ENCODE measurements at regions of chr17 and their contacts with region 1.

Region 1: DNA sequence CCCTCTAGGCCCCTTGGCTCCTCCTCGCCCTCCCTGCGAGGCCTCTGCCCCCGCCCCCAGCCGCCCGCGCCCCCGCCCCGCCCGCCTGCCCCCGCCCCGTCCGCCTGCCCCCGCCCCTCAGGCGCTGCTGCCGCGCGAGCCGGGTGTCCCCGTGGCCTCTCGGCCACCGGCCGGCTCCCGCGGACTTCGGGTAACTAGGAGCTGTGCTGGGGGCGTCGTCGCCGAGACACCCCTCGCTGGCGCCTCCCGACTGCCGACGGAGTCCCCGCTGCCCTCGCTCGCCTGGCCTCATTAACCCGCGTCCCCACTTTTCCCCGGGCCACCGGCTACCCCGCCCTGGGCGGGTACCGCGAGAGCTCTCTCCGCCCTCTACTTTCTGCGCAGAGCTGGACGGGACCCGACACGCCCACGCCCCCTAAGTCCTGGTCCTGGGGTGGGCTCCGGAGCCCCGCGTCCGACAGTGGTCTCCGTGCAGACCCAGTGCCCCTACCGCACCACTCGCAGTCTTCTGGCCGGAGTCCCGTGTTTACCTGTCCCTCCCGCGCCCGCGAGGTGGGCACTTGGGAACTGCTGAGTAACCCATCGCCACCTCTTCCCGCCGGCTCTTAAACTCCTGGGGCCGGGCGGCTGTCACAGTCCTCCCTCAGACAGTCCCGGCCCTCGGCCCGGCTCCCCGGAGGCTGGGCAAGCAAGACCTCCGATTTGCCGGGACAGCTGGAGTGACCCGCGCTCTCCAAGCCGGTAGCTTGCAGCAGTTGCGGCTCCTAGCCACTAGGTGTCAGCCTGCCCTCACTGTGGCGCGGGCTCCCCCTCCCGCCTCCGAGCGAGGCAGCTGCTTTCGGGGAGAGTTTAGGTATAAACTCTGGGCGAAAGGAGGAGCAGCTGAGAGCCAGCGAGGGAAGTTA is at the start of gene TLCD1:
- DNase-seq: peak; percentile 83 to 92 (median 85)
- H3K4me3 ChIP-seq: peak within 1 kb of the TSS; percentile 91
- H3K4me3 Mint-ChIP-seq: peak within 1 kb of the TSS; percentile 94 to 99 (median 97)
- H3K27ac ChIP-seq: peak within 1 kb of the TSS; percentile 97
- H3K27ac Mint-ChIP-seq: peak within 1 kb of the TSS; percentile 97 to 100 (median 99)
- H3K4me1 ChIP-seq: peaks cover 33% of the 10 kb centered on the region
- H3K4me1 Mint-ChIP-seq: peaks cover 51 to 72% (median 54%) of the 10 kb centered on the region in 3 donors
- H3K27me3 ChIP-seq: no peaks in the 10 kb centered on the region
- H3K27me3 Mint-ChIP-seq: peaks cover 0 to 5% of the 10 kb centered on the region in 2 donors
- total RNA-seq, gene TLCD1: 36.5 to 38.9 TPM

Region 2: DNA sequence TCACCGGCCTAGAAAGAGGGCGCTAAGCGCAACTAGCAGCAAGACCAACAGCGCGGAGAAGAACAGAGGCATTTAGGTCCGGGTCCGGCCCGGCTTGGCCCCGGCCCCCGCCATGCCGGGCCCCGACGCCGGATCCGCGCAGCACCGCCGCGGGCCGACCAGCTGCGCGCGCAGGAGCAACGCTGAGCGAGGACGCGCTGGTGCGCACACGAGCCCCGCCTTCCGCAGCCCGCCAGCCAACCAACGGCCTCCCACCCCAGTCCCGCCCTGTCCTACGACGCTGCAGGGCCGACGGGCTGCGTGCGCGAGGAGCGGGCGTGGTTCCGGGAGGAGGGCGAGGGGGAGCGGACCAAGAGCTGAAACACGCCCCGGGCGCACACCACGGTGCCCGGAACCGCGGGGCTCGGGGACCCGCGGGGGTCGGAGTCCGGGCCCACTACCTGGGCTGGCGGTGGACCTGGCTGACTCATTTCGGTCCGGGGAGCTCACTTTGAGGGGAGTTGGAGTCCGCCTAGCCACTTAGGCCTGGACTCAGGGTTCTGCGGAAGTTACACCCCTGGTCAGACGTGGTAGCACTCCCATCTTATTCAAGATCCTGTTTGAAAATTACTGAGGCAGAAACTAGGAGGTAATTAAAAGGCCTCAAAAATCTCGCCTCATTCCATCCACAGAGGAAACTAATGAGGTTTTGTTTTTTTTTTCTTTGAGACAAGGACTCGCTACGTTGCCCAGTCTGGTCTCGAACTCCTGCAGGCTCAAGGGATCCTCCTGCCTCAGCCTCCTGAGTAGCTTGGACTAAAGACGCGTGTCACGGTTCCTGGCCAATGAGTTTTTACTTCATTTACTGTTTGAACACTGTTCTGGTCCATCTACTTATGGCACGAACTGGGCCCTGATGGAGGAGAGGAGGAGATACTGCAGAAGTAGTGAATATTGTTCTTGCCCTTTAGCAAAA is 81.2 kb before region 1 on chr17 and contains the start of gene BLTP2:
- CTCF ChIA-PET with region 1: interaction called, 12 read pairs
- POLR2A ChIA-PET with region 1: interaction called, 18 read pairs
- DNase-seq: peak; percentile 92 to 97 (median 94)
- H3K4me3 ChIP-seq: peak within 1 kb of the TSS; percentile 82
- H3K4me3 Mint-ChIP-seq: peak within 1 kb of the TSS; percentile 86 to 96 (median 93)
- H3K27ac ChIP-seq: peak within 1 kb of the TSS; percentile 90
- H3K27ac Mint-ChIP-seq: peak within 1 kb of the TSS; percentile 90 to 98 (median 98)
- H3K4me1 ChIP-seq: peaks cover 35% of the 10 kb centered on the region
- H3K4me1 Mint-ChIP-seq: peaks cover 38 to 56% (median 45%) of the 10 kb centered on the region in 3 donors
- H3K27me3 ChIP-seq: no peaks in the 10 kb centered on the region
- H3K27me3 Mint-ChIP-seq: peaks cover 0 to 2% of the 10 kb centered on the region in 2 donors
- total RNA-seq, gene BLTP2: 176 to 192 TPM

Region 3: GRCh38 chr17:28667870-28668269 is 58.6 kb before region 1 on chr17:
- CTCF ChIA-PET with region 1: no interaction called
- POLR2A ChIA-PET with region 1: no interaction called
- DNase-seq: no peak
- H3K4me3 ChIP-seq: no peak overlapping the region
- H3K4me3 Mint-ChIP-seq: peak overlapping the region in 1 of 7 donors; percentile 25
- H3K27ac ChIP-seq: no peak overlapping the region
- H3K27ac Mint-ChIP-seq: peak overlapping the region in 6 of 8 donors; percentile 26 to 85 (median 50)
- H3K4me1 ChIP-seq: peaks cover 42% of the 10 kb centered on the region
- H3K4me1 Mint-ChIP-seq: peaks cover 41 to 60% (median 49%) of the 10 kb centered on the region in 3 donors
- H3K27me3 ChIP-seq: no peaks in the 10 kb centered on the region
- H3K27me3 Mint-ChIP-seq: no peaks in the 10 kb centered on the region

Region 4: DNA sequence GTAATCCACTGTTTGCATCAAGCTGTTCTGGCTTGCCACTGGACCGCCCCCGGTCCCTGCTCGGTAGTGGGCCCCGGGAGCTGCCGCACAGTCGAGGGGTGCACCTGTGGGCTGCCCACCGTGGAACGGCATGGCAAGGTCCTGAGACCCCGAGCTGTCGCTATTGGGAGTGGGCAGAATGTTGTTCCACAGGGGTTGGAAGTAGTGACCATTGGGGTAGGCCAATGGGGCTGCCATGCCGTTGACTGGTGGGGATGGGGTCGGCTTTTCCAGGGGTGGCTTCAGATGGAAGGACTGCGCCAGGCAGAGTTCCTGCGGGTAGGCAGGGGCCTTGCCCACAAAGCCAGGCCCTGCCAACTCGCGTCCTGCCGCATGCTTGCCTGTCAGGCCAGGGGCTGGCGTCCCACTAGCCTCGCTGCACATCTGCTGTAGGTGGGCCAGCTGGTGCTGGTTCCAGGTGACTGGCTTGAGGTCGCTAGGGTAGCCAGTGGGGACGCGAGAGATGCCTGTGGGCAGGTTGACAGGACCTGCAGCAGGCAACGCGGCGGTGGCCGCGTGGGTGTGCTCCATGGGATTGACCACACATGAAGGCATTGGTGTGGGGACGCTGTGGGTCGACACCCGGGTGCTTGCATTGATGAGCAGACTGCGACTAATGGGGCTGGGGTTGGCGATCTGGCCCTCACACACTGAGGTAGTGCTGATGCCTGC is 32.1 kb after region 1 on chr17:
- CTCF ChIA-PET with region 1: interaction called, 579 read pairs
- POLR2A ChIA-PET with region 1: interaction called, 3 read pairs
- DNase-seq: no peak
- H3K4me3 ChIP-seq: no peak overlapping the region
- H3K4me3 Mint-ChIP-seq: no peak overlapping the region
- H3K27ac ChIP-seq: no peak overlapping the region
- H3K27ac Mint-ChIP-seq: peak overlapping the region in 1 of 8 donors; percentile 32
- H3K4me1 ChIP-seq: no peaks in the 10 kb centered on the region
- H3K4me1 Mint-ChIP-seq: peaks cover 0 to under 1% (median under 1%) of the 10 kb centered on the region in 3 donors
- H3K27me3 ChIP-seq: no peaks in the 10 kb centered on the region
- H3K27me3 Mint-ChIP-seq: no peaks in the 10 kb centered on the region

Region 5: DNA sequence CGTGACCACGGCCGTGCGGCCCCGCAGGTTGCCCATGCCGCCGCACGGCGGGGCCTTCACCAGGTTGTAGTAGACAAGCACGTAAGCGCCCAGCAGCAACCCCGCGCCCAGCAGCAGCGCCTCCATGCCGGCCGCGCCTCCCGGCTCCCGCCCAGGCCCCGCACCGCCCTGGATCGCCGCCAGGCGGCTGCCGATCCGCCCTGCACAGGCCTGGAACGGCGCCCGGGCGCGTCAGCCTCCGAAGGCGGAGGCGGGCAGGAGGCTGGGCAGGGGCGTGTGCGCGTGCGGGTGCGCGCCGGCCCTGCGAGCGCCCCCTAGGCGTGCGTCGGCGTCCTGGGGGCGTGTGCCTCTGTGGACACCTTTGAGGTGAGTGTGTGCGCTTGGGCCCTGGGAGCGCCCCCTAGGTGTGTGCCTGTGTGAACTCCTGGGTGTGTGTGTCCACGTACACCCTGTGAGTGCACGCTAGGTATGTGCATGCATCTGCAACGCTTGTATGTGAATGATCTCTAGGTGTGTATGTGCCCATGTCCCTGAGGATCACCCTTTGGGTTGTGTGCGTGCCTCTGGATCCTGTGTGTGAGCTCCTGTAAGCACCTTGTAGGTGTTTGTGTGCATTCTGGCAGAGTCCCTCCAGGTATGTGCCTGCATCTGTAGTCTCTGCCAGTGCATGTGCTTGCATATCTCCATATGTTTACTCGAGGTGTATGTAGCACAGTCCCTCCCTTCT is 176.5 kb after region 1 on chr17 and contains the start of gene DHRS13:
- CTCF ChIA-PET with region 1: interaction called, 20 read pairs
- POLR2A ChIA-PET with region 1: interaction called, 4 read pairs
- DNase-seq: peak; percentile 93 to 97 (median 95)
- H3K4me3 ChIP-seq: peak within 1 kb of the TSS; percentile 71
- H3K4me3 Mint-ChIP-seq: peak within 1 kb of the TSS; percentile 87 to 95 (median 92)
- H3K27ac ChIP-seq: peak within 1 kb of the TSS; percentile 82
- H3K27ac Mint-ChIP-seq: peak within 1 kb of the TSS; percentile 78 to 98 (median 96)
- H3K4me1 ChIP-seq: peaks cover 42% of the 10 kb centered on the region
- H3K4me1 Mint-ChIP-seq: peaks cover 33 to 48% (median 37%) of the 10 kb centered on the region in 3 donors
- H3K27me3 ChIP-seq: no peaks in the 10 kb centered on the region
- H3K27me3 Mint-ChIP-seq: no peaks in the 10 kb centered on the region
- total RNA-seq, gene DHRS13: 32.6 to 34.7 TPM

Region 6: DNA sequence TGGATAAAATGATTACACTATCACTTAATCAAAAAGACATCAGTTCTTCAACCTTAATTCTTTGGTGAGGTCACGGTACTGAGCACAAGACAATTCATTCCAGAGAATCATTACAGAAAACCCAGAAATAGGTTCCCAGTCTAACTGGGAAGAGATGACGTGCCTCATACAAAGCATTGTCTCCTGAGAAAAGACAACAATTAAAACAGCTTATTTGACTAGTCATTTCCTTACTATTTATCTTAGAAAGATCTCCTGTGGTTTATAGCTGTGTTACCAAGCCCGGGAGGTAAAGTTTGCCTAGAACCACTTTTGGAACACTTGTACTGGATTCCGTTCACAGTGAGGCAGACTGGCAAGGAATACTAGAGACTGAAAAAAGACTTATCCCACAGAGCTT is 219.8 kb after region 1 on chr17:
- CTCF ChIA-PET with region 1: interaction called, 72 read pairs
- POLR2A ChIA-PET with region 1: interaction called, 65 read pairs
- DNase-seq: no peak
- H3K4me3 ChIP-seq: peak overlapping the region; percentile 33
- H3K4me3 Mint-ChIP-seq: peak overlapping the region; percentile 28 to 97 (median 64)
- H3K27ac ChIP-seq: no peak overlapping the region
- H3K27ac Mint-ChIP-seq: peak overlapping the region; percentile 70 to 99 (median 94)
- H3K4me1 ChIP-seq: peaks cover 66% of the 10 kb centered on the region
- H3K4me1 Mint-ChIP-seq: peaks cover 64 to 69% (median 69%) of the 10 kb centered on the region in 3 donors
- H3K27me3 ChIP-seq: no peaks in the 10 kb centered on the region
- H3K27me3 Mint-ChIP-seq: peaks cover 0 to 4% of the 10 kb centered on the region in 2 donors

Region 7: DNA sequence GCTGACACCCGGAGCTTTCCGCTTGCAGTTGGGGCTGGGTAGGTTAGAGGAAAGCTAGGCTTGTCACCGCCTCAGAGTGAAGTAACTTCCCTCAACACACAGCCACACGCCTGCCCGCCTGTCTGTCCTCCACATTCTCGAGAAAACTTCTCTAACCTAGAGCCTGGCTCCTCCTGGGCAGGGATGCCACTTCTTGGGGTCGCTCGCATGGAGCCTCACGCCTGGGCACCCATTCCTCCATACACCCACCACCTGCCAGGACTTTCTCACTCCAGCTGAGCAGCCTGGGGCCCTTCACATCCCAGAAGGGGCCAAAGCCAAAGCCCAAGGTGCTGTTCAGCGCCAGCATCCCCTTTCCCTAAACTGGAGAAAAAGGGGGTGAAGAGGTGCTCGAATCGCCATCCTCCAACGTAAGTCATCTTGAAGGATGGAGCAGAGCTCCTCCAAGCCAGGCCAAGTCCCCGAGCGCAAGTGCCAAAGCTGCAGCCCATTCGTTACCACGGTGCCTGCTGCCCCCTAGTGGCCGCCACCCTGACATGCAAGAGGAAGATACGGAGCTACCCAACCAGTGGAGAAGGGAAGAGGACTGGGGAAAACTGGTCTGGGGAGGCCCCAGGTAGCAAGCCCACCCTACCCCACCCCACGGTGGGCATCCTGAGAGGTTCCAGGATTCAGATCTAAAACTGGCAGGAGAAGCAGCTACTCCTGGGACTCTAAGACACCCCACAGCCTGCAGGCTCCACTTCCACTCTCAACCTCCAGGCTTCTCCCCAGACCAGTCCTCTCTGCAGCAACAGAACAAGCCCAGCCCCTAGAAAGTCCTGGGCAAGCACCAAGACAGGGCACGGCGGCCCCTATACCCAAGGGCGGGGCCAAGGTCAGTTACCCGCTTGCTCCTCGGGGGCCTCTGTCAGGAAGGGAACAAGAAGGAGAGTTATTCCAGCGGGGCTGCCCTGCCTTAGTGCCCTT is 390.6 kb after region 1 on chr17:
- CTCF ChIA-PET with region 1: interaction called, 14 read pairs
- POLR2A ChIA-PET with region 1: no interaction called
- DNase-seq: peak; percentile 60 to 86 (median 73)
- H3K4me3 ChIP-seq: no peak overlapping the region
- H3K4me3 Mint-ChIP-seq: no peak overlapping the region
- H3K27ac ChIP-seq: no peak overlapping the region
- H3K27ac Mint-ChIP-seq: peak overlapping the region in 4 of 8 donors; percentile 32 to 89 (median 68)
- H3K4me1 ChIP-seq: no peaks in the 10 kb centered on the region
- H3K4me1 Mint-ChIP-seq: peaks cover 4 to 8% (median 7%) of the 10 kb centered on the region in 3 donors
- H3K27me3 ChIP-seq: no peaks in the 10 kb centered on the region
- H3K27me3 Mint-ChIP-seq: no peaks in the 10 kb centered on the region

Measured in CD8-positive, alpha-beta memory T cell (primary cell).